Activated naive CD8-positive, alpha-beta T cell treated with anti-CD3 and anti-CD28 coated beads, Interleukin-2, amount 10 ng/mL, durations not matched to agents 7 days and 5 days (primary cell): ENCODE measurements at regions of chr2 and their contacts with region 1.

Region 1: GRCh38 chr2:7427293-7428060 is 510.3 kb downstream of the RNF144A start:
- DNase-seq: no peak
- ATAC-seq: no peak
- H3K4me3 Mint-ChIP-seq: peak overlapping the region; percentile 34
- H3K27ac Mint-ChIP-seq: peak overlapping the region; percentile 70
- H3K4me1 Mint-ChIP-seq: peaks cover 40% of the 10 kb centered on the region
- H3K27me3 Mint-ChIP-seq: no peaks in the 10 kb centered on the region

Region 2: GRCh38 chr2:7333189-7333765 is 94.2 kb before region 1 on chr2:
- POLR2A ChIA-PET with region 1: no interaction called
- DNase-seq: no peak
- ATAC-seq: no peak
- H3K4me3 Mint-ChIP-seq: no peak overlapping the region
- H3K27ac Mint-ChIP-seq: no peak overlapping the region
- H3K4me1 Mint-ChIP-seq: no peaks in the 10 kb centered on the region
- H3K27me3 Mint-ChIP-seq: peaks cover 23% of the 10 kb centered on the region

Region 3: GRCh38 chr2:7450188-7450832 is 22.8 kb after region 1 on chr2:
- POLR2A ChIA-PET with region 1: interaction called, 22 read pairs
- DNase-seq: no peak
- ATAC-seq: peak; percentile 45
- H3K4me3 Mint-ChIP-seq: peak overlapping the region; percentile 73
- H3K27ac Mint-ChIP-seq: peak overlapping the region; percentile 92
- H3K4me1 Mint-ChIP-seq: peaks cover 70% of the 10 kb centered on the region
- H3K27me3 Mint-ChIP-seq: no peaks in the 10 kb centered on the region

Region 4: DNA sequence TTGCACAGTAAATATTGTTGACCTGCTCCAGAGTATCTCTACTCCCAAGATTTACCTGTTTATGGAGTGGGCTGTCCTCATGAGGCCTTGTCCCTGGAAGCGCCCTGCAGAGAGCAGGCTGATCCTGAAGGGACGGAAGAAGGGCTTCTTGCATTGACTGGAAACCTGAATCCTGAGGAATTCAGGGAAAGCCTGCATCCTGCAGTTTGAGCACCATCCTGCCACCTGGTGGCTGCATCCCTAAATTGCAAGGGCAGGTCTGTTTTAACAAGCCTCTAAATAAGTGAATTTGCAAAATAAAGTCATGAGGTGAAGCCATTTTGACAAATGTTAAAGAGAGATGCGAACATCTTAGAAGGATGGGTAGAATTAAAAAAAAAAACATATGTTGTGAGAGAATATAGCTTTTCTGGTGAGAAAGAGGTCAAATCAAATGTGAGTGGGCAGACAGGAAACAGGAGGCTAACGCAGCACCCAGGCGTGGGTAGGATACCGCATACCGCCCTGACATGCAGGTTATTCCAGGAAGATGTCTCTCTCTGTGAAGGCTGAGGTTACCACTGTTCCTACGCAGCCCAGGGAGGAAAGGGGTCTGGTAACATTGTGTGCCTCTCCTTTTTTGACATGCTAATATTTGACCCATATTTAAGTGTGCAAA is 244.7 kb after region 1 on chr2:
- POLR2A ChIA-PET with region 1: interaction called, 13 read pairs
- DNase-seq: peak; percentile 74
- ATAC-seq: peak; percentile 86
- H3K4me3 Mint-ChIP-seq: peak overlapping the region; percentile 79
- H3K27ac Mint-ChIP-seq: peak overlapping the region; percentile 95
- H3K4me1 Mint-ChIP-seq: peaks cover 50% of the 10 kb centered on the region
- H3K27me3 Mint-ChIP-seq: no peaks in the 10 kb centered on the region

Region 5: GRCh38 chr2:7725171-7725849 is 297.8 kb after region 1 on chr2:
- POLR2A ChIA-PET with region 1: interaction called, 18 read pairs
- DNase-seq: no peak
- ATAC-seq: peak; percentile 88
- H3K4me3 Mint-ChIP-seq: peak overlapping the region; percentile 95
- H3K27ac Mint-ChIP-seq: peak overlapping the region; percentile 92
- H3K4me1 Mint-ChIP-seq: peaks cover 40% of the 10 kb centered on the region
- H3K27me3 Mint-ChIP-seq: no peaks in the 10 kb centered on the region